GM10248 (cell line): ENCODE measurements at regions of chr14 and their contacts with region 1.

Region 1: GRCh38 chr14:24108336-24108874 is 6.2 kb upstream of the DCAF11 start:
- DNase-seq: no peak
- CTCF ChIP-seq: no peak

Region 2: DNA sequence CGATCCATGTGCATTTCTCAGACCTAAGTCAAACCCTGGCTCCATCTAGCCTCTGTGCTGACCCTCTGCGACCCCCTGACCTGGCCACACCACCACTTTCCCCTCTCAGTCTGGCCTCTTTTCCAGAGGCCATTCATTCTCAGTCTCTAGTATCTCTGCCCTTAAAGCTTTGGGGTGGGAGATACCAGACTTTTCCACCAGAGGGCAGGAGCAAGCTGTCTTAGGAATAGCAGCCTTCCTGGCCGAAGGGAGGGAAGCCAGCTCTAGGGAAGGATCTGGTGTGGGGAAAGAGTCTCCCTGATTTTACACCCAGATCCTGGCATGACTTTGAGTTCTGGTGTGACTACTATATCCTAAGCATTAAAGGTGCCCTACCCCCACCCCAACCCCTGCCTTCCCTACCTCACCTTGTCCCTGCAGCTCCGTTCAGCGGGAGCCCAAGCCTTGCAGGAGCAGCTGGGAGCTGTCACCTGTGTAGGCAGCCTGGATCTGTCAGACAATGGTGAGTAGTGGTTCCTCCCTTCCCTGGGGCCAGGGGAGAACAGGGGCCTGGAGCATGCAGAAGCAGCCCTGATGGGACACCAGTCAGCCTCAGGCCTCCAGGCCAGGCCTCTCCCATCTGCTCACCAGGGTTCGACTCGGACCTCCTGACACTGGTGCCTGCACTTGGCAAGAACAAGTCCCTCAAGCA is 50.0 kb before region 1 on chr14:
- CTCF ChIA-PET with region 1: interaction called, 88 read pairs
- POLR2A ChIA-PET with region 1: interaction called, 3 read pairs
- DNase-seq: peak; percentile 70
- CTCF ChIP-seq: peak; percentile 73

Region 3: GRCh38 chr14:24067145-24068082 is 41.0 kb before region 1 on chr14:
- CTCF ChIA-PET with region 1: interaction called, 11 read pairs
- POLR2A ChIA-PET with region 1: no interaction called
- DNase-seq: no peak
- CTCF ChIP-seq: no peak

Region 4: GRCh38 chr14:24080888-24081738 is 27.3 kb before region 1 on chr14:
- CTCF ChIA-PET with region 1: interaction called, 32 read pairs
- POLR2A ChIA-PET with region 1: no interaction called
- DNase-seq: peak; percentile 86
- CTCF ChIP-seq: no peak

Region 5: GRCh38 chr14:24093901-24094761 is 14.3 kb before region 1 on chr14 and contains the start of gene PCK2:
- CTCF ChIA-PET with region 1: interaction called, 246 read pairs
- POLR2A ChIA-PET with region 1: interaction called, 29 read pairs
- DNase-seq: peak; percentile 91
- CTCF ChIP-seq: no peak

Region 6: GRCh38 chr14:24123508-24124417 is 15.4 kb after region 1 on chr14:
- CTCF ChIA-PET with region 1: interaction called, 38 read pairs
- POLR2A ChIA-PET with region 1: interaction called, 18 read pairs
- DNase-seq: peak; percentile 45
- CTCF ChIP-seq: no peak

Region 7: GRCh38 chr14:24146978-24147760 is 38.8 kb after region 1 on chr14 and contains the start of gene RNF31:
- CTCF ChIA-PET with region 1: interaction called, 17 read pairs
- POLR2A ChIA-PET with region 1: interaction called, 20 read pairs
- DNase-seq: peak; percentile 97
- CTCF ChIP-seq: no peak

Region 8: GRCh38 chr14:24171422-24172260 is 63.2 kb after region 1 on chr14 and contains the start of gene REC8:
- CTCF ChIA-PET with region 1: no interaction called
- POLR2A ChIA-PET with region 1: no interaction called
- DNase-seq: peak; percentile 91
- CTCF ChIP-seq: no peak